ENCODE measurements at regions of chr6 and their contacts with region 1.

Region 1: GRCh38 chr6:36827261-36828079 is 11.8 kb downstream of the CPNE5 start:
- DNase-seq: peak; percentile 99
- H3K4me3 ChIP-seq: peak overlapping the region in 1 of 3 experiments; percentile 13
- H3K27ac ChIP-seq: peak overlapping the region; percentile 100
- H3K4me1 ChIP-seq: peaks cover 72% of the 10 kb centered on the region
- H3K27me3 ChIP-seq: no peaks in the 10 kb centered on the region
- CTCF ChIP-seq: no peak
- POLR2A ChIP-seq: peak; percentile 59

Region 2: DNA sequence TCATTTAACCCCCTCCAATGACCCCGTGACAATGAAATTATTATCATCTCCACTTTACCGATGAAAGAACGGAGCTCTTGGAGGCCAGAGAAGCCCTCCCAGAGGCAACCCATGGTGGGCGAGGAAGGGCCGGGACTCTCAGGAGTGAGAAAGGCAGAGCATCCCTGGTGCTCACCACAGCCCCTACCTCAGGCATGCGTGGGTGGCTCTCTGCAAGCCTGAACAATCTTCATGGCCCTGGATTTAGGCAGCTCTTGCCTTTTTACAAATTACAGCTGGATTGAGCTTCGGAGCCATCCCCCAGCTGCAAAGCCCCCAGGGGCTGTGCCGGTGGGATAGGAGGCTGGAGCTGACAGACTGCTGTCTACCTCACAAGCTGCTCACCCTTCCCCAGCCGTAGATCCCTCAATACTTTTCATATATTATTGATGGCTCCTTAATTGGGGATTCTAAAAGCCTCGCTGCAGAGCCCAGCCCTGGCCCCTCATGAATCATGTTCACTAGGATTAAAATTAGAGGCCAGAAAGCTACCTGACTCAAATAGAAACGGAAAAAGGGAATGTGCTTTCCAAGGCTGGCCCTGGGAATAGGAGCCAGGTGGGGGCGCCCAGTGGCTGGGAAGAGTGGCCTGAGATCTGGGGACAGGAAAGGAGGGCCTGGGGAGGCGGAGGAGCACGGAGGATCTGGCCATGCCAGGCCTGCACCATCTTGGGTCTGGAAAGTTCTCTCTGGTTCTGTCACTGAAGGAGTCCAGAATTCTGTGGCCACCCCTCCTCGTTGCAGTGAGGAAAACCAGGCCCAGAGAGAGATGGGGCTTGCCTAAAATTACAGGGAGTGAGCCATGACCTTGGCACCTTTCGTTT is 17.3 kb before region 1 on chr6:
- CTCF ChIA-PET with region 1: interaction called, 11 read pairs
- POLR2A ChIA-PET with region 1: no interaction called
- dilution Hi-C with region 1: no loop called
- intact Hi-C with region 1: no loop called
- DNase-seq: no peak
- H3K4me3 ChIP-seq: no peak overlapping the region
- H3K27ac ChIP-seq: no peak overlapping the region
- H3K4me1 ChIP-seq: peaks cover 4% of the 10 kb centered on the region
- H3K27me3 ChIP-seq: no peaks in the 10 kb centered on the region
- CTCF ChIP-seq: peak in 1 of 2 donors; percentile 26
- POLR2A ChIP-seq: no peak

Region 3: GRCh38 chr6:36839749-36840431 is 12.4 kb after region 1 on chr6:
- CTCF ChIA-PET with region 1: interaction called, 3 read pairs
- POLR2A ChIA-PET with region 1: no interaction called
- dilution Hi-C with region 1: no loop called
- intact Hi-C with region 1: loop called (anchors 1 kb)
- DNase-seq: no peak
- H3K4me3 ChIP-seq: peak overlapping the region; percentile 37 to 85 (median 62)
- H3K27ac ChIP-seq: no peak overlapping the region
- H3K4me1 ChIP-seq: peaks cover 21% of the 10 kb centered on the region
- H3K27me3 ChIP-seq: no peaks in the 10 kb centered on the region
- CTCF ChIP-seq: peak; percentile 12 to 27
- POLR2A ChIP-seq: no peak